ENCODE measurements at regions of chr1 and their contacts with region 1.

Region 1: DNA sequence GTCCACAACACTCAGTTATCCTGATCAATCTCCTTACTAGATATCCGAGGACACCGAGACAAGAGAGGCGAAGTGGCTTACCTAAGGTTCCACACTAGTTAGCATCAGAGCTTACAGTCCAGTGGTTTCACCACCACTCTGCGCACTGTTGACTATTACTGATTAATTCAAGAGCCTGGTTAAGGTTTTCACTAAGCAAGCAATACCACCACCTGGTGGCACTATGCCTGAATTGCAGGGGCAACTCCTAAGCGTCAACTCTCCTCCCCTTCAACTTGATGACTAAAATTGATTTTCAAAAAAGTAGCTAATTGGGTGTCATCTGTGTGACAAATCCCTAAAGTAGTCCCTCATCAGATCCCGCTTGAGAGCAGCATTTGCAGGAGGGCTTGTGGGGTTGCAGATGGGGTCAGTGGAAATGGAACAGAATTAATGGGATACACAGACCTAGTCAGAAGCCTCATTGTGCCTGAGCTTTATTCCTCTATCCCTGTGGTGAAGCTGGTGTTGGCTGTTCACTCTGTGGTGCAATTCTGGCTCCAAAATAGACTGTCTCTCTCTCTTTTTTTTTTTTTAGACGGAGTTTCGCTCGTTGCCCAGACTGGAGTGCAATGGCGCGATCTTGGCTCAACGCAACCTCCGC is 9.1 kb downstream of the TTC22 start:
- DNase-seq: no peak
- ATAC-seq: no peak
- H3K4me3 ChIP-seq: no peak overlapping the region
- H3K27ac ChIP-seq: no peak overlapping the region
- H3K4me1 ChIP-seq: no peaks in the 10 kb centered on the region
- H3K27me3 ChIP-seq: peaks cover 0 to 34% (median 16%) of the 10 kb centered on the region in 7 donors
- CTCF ChIP-seq: peak in 5 of 9 donors; percentile 18 to 53 (median 29)

Region 2: DNA sequence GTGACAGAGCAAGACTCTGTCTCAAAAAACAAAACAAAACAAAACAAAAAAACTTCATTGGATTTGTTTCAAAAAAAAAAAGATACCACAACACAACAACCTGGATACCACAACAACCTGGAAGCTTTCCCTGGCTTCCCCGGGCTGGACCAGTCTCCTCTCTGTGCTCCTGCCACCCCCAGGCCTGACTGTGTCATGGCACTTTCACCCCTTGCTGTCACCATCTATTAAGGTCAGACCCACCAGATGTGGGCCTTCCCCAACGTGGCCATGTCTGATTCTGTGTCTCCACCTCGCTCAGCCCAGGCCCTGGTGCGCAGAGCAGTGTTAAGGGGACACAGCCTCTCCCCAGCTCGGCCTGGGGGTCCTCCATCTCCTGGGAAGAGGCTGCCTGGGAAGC is 272.3 kb before region 1 on chr1:
- intact Hi-C with region 1: loop called in 1 of 10 experiments (anchors 10 kb)
- DNase-seq: no peak
- ATAC-seq: peak in 2 of 8 donors; percentile 33 to 56
- H3K4me3 ChIP-seq: no peak overlapping the region
- H3K27ac ChIP-seq: no peak overlapping the region
- H3K4me1 ChIP-seq: no peaks in the 10 kb centered on the region
- H3K27me3 ChIP-seq: no peaks in the 10 kb centered on the region
- CTCF ChIP-seq: peak in 5 of 9 donors; percentile 10 to 31 (median 17)

Region 3: DNA sequence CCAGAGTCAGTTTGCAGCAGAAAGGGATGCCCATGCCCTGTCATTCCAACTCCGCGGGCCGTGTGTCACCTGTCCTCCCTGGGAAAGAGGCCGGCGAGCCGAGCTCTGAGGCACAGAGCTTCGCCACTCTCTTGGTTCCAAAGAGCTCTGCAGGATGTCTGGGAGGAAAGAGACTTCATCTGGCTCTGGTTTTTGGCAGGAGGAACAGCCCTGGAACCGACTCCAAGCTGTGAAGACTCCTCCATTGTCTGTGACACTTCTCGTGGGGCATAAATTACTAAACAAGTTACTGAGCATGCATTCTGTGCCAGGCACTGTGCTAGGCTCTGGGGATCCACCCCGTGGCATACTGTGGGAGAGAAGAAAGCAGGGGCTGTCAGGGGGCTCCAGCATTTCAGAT is 164.8 kb before region 1 on chr1:
- intact Hi-C with region 1: no loop called
- DNase-seq: no peak
- ATAC-seq: no peak
- H3K4me3 ChIP-seq: no peak overlapping the region
- H3K27ac ChIP-seq: no peak overlapping the region
- H3K4me1 ChIP-seq: peaks cover 0 to 19% (median 0%) of the 10 kb centered on the region in 9 donors
- H3K27me3 ChIP-seq: no peaks in the 10 kb centered on the region
- CTCF ChIP-seq: no peak

Region 4: DNA sequence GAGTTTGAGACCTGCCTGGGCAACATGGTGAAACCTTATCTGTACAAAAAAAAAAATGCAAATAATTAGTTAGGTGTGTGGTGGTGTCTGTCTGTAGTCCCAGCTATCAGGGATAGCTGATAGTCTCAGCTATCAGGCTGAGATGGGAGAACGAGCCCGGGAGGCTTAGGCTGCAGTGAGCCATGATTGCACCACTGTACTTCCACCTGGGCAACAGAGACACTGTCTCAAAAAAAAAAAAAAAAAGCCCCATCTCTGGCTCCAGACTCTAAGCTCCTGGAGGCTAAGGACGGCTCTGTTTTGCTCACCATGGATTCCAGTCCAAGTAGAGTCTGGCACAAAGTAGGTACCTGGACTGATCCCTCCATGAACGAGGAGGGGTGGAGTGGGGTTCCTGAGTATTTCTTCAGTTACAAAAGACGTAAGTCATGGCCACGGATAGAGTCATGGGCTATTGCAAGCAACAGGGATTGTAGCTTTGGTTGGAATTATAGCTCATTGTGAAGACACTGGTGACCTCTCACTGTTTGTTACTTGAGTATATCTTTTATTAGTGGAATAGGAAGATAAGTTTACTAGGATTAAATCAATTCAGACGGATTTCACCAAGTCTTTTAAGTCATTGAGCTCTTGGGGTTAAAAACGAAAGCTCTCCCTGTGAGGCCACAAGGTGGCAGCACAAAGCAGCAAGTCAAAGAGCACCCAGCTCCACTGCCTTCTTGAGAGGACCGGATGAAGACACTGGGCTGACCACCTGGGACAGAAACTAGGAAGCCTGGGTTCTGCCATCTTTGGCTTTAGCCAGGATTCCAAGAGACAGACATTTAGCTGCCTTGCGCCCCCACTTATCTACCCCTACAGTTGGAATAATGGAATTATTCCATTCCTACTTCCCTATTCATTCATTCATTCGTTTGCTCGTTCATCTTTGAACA is 152.9 kb after region 1 on chr1:
- intact Hi-C with region 1: no loop called
- DNase-seq: peak; percentile 52 to 69
- ATAC-seq: peak in 7 of 8 donors; percentile 71 to 85 (median 77)
- H3K4me3 ChIP-seq: peak overlapping the region in 1 of 10 donors; percentile 24
- H3K27ac ChIP-seq: no peak overlapping the region
- H3K4me1 ChIP-seq: peaks cover 0 to 10% (median 0%) of the 10 kb centered on the region in 9 donors
- H3K27me3 ChIP-seq: no peaks in the 10 kb centered on the region
- CTCF ChIP-seq: peak; percentile 61 to 90 (median 85)